ENCODE measurements at regions of chr1 and their contacts with region 1.

Region 1: DNA sequence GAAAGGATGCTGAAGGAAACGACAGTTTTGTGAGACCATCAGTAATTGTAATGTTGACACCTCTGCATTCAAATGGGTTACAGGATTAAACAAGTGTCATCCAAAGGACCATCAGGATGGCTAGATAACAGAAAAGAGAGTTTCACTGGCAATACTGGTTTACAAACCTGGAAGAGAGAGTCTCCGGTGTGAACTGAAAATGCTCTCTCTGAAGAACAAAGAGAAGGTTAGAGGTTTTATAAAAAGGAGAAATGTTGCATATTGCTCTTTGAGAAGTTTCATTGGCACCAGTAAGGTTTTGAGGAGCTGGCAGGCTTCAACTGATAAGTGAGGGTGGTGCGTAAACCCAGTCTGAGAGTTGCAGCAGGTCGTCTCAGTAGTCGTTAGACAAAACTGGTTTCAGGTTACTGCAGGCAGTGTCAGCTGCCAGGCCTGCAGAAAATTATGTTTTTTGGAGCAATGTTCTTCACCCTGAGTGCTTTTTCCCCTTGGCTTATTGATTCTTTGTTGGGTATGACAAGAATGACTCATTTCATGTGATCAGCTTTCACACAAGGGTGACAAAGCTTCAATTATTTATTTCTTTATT is 42.2 kb downstream of the KCNK1 start:
- DNase-seq: peak; percentile 17 to 46
- H3K4me3 ChIP-seq: peak overlapping the region; percentile 37; the same call in 1 of the 2 replicates
- H3K27ac ChIP-seq: peak overlapping the region; percentile 96
- H3K4me1 ChIP-seq: peaks cover 75% of the 10 kb centered on the region
- H3K27me3 ChIP-seq: no peaks in the 10 kb centered on the region
- CTCF ChIP-seq: no peak

Region 2: GRCh38 chr1:233621923-233622322 is 34.2 kb before region 1 on chr1:
- CTCF ChIA-PET with region 1: no interaction called
- POLR2A ChIA-PET with region 1: interaction called, 12 read pairs
- intact Hi-C with region 1: no loop called
- DNase-seq: no peak
- H3K4me3 ChIP-seq: no peak overlapping the region
- H3K27ac ChIP-seq: no peak overlapping the region
- H3K4me1 ChIP-seq: peaks cover 9% of the 10 kb centered on the region
- H3K27me3 ChIP-seq: no peaks in the 10 kb centered on the region
- CTCF ChIP-seq: no peak

Region 3: DNA sequence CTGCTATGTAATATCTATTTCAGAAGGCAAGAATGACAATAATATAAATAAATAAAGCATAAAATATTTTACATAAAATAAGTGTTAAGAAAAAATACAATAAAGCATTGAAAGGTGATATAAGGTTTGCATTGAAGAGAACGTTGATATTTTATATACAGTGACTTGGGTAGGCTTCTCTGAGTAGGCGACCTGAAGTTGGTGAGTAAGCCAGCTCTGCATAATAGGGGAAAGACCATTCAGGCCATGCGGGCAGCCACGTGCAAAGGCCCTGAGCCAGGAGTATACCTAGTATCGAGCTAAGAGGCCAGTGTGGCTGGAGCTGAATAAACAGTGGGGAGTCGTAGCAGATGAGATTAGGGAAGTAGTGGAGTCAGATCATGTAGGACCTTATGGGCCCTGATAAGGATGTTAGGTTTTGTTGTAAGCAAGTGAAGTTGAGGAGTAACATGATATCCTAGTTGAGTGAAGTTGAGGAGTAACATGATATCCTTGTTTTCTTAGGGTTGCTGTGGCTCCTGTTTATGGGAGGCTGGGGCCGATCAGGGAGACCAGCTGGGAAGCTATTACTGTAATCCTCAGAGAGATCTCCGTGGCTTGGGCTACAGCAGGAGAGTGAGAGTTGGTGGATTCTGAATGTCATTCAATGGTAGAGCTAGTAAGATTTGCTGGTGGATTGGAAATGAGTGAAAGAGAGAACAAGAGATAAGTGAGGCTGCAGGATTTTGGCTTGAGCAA is 20.2 kb before region 1 on chr1:
- CTCF ChIA-PET with region 1: no interaction called
- POLR2A ChIA-PET with region 1: interaction called, 5 read pairs
- intact Hi-C with region 1: loop called (anchors 1 kb)
- DNase-seq: peak; percentile 88 to 98
- H3K4me3 ChIP-seq: no peak overlapping the region; the same call in 1 of the 2 replicates
- H3K27ac ChIP-seq: peak overlapping the region; percentile 64
- H3K4me1 ChIP-seq: peaks cover 34% of the 10 kb centered on the region
- H3K27me3 ChIP-seq: no peaks in the 10 kb centered on the region
- CTCF ChIP-seq: no peak

Region 4: GRCh38 chr1:233675893-233676292 is 19.8 kb after region 1 on chr1:
- CTCF ChIA-PET with region 1: no interaction called
- POLR2A ChIA-PET with region 1: interaction called, 4 read pairs
- intact Hi-C with region 1: loop called (anchors 2 kb)
- DNase-seq: no peak
- H3K4me3 ChIP-seq: no peak overlapping the region
- H3K27ac ChIP-seq: no peak overlapping the region
- H3K4me1 ChIP-seq: peaks cover 17% of the 10 kb centered on the region; the same call in 1 of the 2 replicates
- H3K27me3 ChIP-seq: no peaks in the 10 kb centered on the region
- CTCF ChIP-seq: no peak

Region 5: DNA sequence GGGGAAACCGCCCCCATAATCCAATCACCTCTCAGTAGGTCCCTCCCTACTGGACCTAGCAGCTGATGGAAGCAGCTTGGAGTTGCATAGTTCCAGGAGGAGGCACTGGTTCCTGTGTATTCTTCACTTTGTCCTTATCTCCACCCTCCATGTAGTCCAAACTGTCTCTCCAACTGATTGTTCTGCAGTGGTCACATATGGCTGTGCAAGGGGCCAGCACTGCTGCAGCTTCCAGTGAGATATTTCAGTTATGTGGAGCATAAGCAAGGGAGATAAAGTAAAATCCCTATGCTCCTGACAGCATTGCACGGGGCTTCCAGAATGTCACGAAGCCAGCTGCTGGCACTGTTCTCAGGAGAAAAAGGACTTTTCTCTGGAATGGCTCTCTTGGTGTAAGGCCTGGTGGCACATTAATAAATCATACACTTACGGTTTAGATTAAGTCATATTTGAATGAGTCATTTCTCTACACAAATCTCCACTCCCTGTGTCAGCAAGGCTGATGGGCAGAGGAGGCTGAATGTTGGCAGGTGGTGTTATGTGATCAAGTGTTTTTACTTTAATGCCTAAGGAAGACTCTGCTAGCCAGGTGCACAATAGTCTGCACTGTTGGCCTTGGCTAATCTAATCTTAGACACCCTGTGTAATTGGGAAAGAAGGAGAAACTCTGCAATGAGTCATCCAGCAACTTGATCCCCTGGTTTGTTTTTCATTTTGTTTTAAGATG is 51.2 kb after region 1 on chr1:
- CTCF ChIA-PET with region 1: no interaction called
- POLR2A ChIA-PET with region 1: no interaction called
- intact Hi-C with region 1: loop called (anchors 1 kb)
- DNase-seq: peak; percentile 81 to 99
- H3K4me3 ChIP-seq: peak overlapping the region; percentile 26; the same call in 1 of the 2 replicates
- H3K27ac ChIP-seq: peak overlapping the region; percentile 84
- H3K4me1 ChIP-seq: peaks cover 67% of the 10 kb centered on the region
- H3K27me3 ChIP-seq: no peaks in the 10 kb centered on the region
- CTCF ChIP-seq: no peak

Measured in PC-9 (cell line).